Activated naive CD4-positive, alpha-beta T cell treated with anti-CD3 and anti-CD28 coated beads for 36 hours (primary cell): ENCODE measurements at regions of chr1 and their contacts with region 1.

Region 1: DNA sequence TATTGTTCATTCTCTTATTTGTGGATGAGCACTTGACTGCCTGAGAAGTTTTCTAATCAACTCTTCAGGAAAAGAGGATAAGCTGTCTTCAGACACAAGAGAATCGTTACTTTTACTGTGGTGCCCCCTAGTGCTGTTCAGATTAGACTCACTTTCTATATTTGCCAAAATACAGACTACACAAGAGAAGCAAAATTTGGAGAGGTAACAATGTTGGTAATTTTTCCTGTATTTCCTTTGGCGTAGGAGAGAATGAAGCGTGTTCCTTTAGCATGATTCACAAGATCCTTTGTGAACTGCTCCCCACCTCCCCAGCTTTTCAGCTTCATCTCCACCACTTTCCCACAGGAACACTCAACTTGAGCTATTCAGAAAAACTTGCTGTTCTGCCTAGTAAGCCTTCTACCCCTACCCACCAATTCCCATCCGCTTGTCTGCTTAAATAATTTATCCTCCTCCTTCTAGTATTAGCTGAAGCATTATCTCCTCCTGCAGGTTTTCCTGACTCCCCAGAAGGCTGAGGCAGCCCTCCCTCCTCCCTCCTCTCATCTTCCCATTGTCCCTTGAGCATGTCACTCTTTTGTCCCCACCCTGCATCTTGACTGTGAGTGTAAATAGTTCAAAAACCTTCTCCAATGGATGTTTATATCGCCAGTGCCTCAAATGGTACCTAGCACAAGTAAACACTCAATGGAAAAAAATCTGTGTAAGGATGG is 4.5 kb downstream of the TNFSF4 start:
- DNase-seq: peak; percentile 39
- H3K4me3 Mint-ChIP-seq: no peak overlapping the region
- H3K27ac Mint-ChIP-seq: no peak overlapping the region
- H3K4me1 Mint-ChIP-seq: peaks cover 37% of the 10 kb centered on the region
- H3K27me3 Mint-ChIP-seq: peaks cover 4% of the 10 kb centered on the region

Region 2: DNA sequence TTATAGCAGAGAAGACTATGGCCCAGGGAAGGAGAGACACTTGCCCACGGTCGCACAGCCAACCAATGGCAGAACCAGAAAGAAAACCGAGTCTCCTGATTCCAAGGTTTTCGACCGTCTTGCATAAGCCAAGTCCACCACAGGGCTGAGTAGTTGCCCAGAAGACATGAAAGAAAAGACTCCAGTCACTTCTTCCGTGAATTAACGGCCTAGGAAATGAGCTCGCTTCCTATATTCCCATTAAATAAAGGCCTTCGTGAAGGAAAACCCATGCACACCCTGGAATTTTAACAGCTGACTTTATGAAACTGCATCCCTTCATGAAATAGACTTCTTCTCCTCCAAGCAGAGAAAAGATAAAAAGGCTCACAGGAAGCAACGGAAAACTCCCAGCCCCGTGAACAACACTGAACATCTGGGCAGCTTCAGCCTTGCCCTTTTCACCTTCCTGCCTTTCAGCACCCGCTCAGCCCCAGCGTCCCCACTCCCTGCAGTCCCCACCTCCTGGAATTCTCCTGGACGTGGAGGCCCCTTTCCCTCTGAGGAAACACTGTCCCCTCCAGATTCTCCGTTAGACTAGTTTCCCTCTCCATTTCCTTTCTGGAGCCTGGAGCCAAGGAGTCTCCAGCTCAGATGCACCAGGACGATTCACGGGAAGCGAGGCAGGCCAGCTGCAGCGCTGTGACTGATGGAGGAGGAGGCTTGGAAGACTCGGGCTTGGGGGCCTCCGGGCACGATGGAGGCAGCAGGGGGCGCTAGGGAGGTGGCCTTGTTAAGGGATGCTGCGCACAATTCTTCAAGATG is 1547.4 kb before region 1 on chr1:
- CTCF ChIA-PET with region 1: no interaction called
- intact Hi-C with region 1: no loop called
- DNase-seq: peak; percentile 92
- H3K4me3 Mint-ChIP-seq: peak overlapping the region; percentile 39
- H3K27ac Mint-ChIP-seq: no peak overlapping the region
- H3K4me1 Mint-ChIP-seq: peaks cover 11% of the 10 kb centered on the region
- H3K27me3 Mint-ChIP-seq: peaks cover 5% of the 10 kb centered on the region

Region 3: GRCh38 chr1:172449585-172450534 is 752.7 kb before region 1 on chr1:
- CTCF ChIA-PET with region 1: no interaction called
- intact Hi-C with region 1: loop called (anchors 2 kb)
- DNase-seq: peak; percentile 53
- H3K4me3 Mint-ChIP-seq: peak overlapping the region; percentile 7
- H3K27ac Mint-ChIP-seq: peak overlapping the region; percentile 26
- H3K4me1 Mint-ChIP-seq: peaks cover 31% of the 10 kb centered on the region
- H3K27me3 Mint-ChIP-seq: no peaks in the 10 kb centered on the region

Region 4: GRCh38 chr1:172778456-172779455 is 423.8 kb before region 1 on chr1:
- CTCF ChIA-PET with region 1: interaction called, 9 read pairs
- intact Hi-C with region 1: loop called (anchors 1 kb)
- DNase-seq: no peak
- H3K4me3 Mint-ChIP-seq: no peak overlapping the region
- H3K27ac Mint-ChIP-seq: no peak overlapping the region
- H3K4me1 Mint-ChIP-seq: peaks cover 16% of the 10 kb centered on the region
- H3K27me3 Mint-ChIP-seq: no peaks in the 10 kb centered on the region

Region 5: DNA sequence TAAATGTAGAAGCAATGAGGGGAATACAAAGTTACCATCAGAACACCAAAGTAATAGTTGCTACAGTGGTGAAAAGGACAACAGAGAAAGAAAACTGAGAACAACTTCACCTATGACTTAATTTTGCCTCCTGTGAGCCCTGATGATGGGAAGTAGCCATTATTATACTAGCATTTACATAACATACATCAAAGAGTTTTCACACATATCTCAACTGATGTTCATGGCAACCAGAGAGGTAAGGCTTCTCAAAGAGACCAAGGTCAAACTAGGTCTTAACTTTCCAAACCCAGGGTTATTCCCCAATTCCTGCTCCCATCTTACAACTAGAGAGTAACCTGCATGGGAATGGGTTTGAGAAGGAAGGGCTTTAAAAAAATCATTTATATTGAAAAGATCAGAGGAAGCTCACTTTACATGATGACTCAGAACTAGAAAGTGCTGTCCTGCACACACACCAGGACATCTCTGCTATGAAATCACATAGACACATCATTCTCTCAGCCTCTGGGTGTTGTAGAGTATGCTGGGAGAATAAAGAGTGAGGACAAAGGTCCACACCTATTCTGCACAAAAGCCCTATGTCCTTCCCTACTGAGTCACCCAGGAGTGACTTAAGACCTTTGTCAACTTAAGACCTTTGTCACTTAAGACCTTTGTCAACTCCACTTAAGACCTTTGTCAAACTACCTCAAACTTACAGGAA is 331.5 kb before region 1 on chr1:
- CTCF ChIA-PET with region 1: no interaction called
- intact Hi-C with region 1: loop called (anchors 1 kb)
- DNase-seq: no peak
- H3K4me3 Mint-ChIP-seq: no peak overlapping the region
- H3K27ac Mint-ChIP-seq: no peak overlapping the region
- H3K4me1 Mint-ChIP-seq: peaks cover 32% of the 10 kb centered on the region
- H3K27me3 Mint-ChIP-seq: peaks cover 24% of the 10 kb centered on the region

Region 6: DNA sequence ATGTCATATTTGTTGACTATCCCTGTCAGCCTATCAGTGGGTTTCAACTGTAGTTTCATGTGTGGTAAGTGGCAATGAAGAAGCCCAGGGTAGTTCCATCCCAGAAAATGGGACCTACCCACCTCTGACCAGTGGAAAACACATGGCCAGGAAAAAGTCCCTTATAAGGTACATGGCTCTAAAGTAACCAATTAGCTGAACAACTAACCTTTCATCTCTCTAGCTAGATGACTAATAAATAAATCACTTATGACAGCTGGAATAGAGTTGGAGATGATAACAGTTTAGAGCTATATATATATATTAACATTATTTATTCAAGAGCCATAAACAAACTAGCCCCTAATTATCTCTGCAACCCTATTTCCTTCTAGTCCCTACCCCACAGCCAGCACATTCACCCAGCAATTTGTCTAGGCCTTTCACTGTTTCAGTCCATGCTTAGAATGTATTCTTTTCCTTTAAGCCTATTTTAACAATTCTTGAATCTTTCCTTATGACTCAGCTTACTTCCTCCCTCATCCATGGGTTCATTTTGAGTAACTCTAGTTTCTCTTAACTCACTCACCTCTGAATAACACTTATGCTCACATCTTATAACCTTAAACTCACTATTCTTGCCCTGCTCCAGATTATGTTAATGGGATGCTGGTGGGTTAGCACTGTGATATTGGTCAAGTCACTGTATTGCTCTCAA is 235.6 kb before region 1 on chr1:
- CTCF ChIA-PET with region 1: no interaction called
- intact Hi-C with region 1: loop called (anchors 2 kb)
- DNase-seq: no peak
- H3K4me3 Mint-ChIP-seq: no peak overlapping the region
- H3K27ac Mint-ChIP-seq: no peak overlapping the region
- H3K4me1 Mint-ChIP-seq: peaks cover 18% of the 10 kb centered on the region
- H3K27me3 Mint-ChIP-seq: peaks cover 2% of the 10 kb centered on the region

Region 7: GRCh38 chr1:173297798-173298391 is 95.3 kb after region 1 on chr1:
- CTCF ChIA-PET with region 1: no interaction called
- intact Hi-C with region 1: loop called (anchors 1 kb)
- DNase-seq: peak; percentile 76
- H3K4me3 Mint-ChIP-seq: no peak overlapping the region
- H3K27ac Mint-ChIP-seq: peak overlapping the region; percentile 2
- H3K4me1 Mint-ChIP-seq: peaks cover 41% of the 10 kb centered on the region
- H3K27me3 Mint-ChIP-seq: no peaks in the 10 kb centered on the region

Region 8: GRCh38 chr1:173409613-173410012 is 207.0 kb after region 1 on chr1:
- CTCF ChIA-PET with region 1: no interaction called
- intact Hi-C with region 1: loop called (anchors 2 kb)
- DNase-seq: no peak
- H3K4me3 Mint-ChIP-seq: no peak overlapping the region
- H3K27ac Mint-ChIP-seq: no peak overlapping the region
- H3K4me1 Mint-ChIP-seq: peaks cover 36% of the 10 kb centered on the region
- H3K27me3 Mint-ChIP-seq: no peaks in the 10 kb centered on the region